B cell (primary cell): ENCODE measurements at regions of chr17 and their contacts with region 1.

Region 1: DNA sequence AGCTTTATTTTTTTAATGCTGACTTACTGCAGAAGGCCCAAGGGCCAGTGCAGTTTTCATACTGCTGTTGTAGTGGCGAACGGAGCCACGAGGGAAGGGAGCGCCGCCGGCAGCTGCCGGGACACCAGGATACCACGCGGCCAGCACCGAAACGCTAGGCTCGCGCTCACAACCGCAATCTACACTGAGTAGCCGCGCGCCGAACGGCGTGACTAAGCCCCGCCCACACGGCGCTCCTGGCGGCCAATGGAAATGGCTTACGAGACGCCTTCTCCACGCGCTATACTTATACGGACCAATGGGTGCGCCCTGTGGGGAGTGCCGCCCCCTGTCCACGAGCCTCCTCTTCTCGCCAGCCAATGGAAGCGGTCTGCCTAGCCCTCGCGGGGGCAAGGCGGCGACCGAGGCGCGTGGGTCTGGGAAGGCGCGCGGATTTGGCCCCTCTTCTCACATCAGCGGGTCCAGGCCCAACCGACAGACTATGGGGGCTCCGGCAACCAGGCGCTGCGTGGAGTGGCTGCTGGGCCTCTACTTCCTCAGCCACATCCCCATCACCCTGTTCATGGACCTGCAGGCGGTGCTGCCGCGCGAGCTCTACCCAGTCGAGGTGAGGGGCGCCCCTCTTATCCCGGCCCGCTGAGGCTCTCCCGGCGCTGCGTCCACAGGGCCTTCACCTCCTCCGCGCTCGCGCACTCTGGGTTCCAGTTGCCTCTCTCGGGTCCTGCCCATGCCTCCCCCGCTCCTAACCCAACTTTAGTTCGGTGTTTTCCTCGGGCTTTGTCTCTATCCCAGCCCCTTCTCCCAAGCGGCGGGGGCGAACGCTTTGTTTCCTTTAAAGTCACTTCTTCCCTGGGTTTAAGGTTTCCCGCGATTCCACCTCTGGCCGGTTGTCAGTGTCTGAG is at the start of gene TMEM97:
- DNase-seq: peak; percentile 96
- ATAC-seq: peak; percentile 99
- H3K4me3 ChIP-seq: peak within 1 kb of the TSS; percentile 49 to 83 (median 67)
- H3K4me3 Mint-ChIP-seq: peak within 1 kb of the TSS; percentile 88
- H3K27ac ChIP-seq: peak within 1 kb of the TSS; percentile 8 to 37
- H3K27ac Mint-ChIP-seq: peak within 1 kb of the TSS; percentile 88
- H3K4me1 ChIP-seq: peaks cover 13 to 22% of the 10 kb centered on the region in 2 donors
- H3K4me1 Mint-ChIP-seq: peaks cover 22% of the 10 kb centered on the region
- H3K27me3 ChIP-seq: no peaks in the 10 kb centered on the region
- H3K27me3 Mint-ChIP-seq: no peaks in the 10 kb centered on the region
- CTCF ChIP-seq: no peak
- total RNA-seq, gene TMEM97: 5.4 and 6.4 TPM in 2 replicates

Region 2: DNA sequence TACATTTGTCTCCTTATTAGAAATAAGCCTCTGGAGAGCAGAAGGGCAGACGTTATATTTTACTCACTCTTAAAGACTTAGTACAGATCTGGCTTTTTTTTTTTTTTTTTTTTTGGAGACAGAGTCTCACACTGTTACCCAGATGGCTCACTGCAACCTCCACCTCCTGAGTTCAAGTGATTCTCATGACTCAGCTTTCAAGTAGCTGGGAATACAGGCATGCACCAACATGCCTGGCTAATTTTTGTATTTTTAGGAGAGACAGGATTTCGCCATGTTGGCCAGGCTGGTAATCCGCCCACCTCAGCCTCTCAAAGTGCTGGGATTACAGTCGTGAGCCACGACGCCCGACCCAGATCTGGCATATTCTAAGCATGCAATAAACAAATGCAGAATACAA is 36.4 kb before region 1 on chr17:
- CTCF ChIA-PET with region 1: no interaction called
- POLR2A ChIA-PET with region 1: no interaction called
- intact Hi-C with region 1: loop called (anchors 5 kb)
- DNase-seq: no peak
- ATAC-seq: no peak
- H3K4me3 ChIP-seq: no peak overlapping the region
- H3K4me3 Mint-ChIP-seq: no peak overlapping the region
- H3K27ac ChIP-seq: no peak overlapping the region
- H3K27ac Mint-ChIP-seq: no peak overlapping the region
- H3K4me1 ChIP-seq: peaks cover 12 to 14% of the 10 kb centered on the region in 2 donors
- H3K4me1 Mint-ChIP-seq: peaks cover 11% of the 10 kb centered on the region
- H3K27me3 ChIP-seq: peaks cover 0 to 23% (median 10%) of the 10 kb centered on the region in 4 experiments
- H3K27me3 Mint-ChIP-seq: peaks cover 10% of the 10 kb centered on the region
- CTCF ChIP-seq: no peak

Region 3: DNA sequence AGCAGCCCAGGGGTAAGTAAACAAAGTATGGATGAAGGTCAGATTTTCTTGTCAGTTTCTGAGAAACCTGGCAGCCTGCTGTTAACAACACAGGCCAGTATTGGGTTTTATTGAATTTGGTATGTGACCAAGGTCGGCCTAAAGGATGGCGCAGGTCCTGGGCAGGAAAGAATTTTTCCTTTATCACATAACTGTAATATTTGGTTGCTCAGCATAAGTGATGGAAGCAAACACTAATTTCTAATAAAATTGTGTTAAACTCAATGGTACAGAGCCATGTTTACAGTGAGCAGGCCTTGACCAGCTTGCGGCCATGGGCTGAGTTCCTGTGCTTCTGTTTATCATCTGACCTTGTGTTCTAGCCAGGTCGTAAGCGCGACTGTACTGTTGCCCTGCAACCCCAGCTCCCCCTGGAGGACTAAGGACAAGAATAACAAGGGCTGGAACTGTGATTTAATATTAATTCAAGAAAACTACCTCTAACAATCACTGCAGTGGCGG is 27.8 kb after region 1 on chr17:
- CTCF ChIA-PET with region 1: no interaction called
- POLR2A ChIA-PET with region 1: no interaction called
- intact Hi-C with region 1: no loop called
- DNase-seq: no peak
- ATAC-seq: no peak
- H3K4me3 ChIP-seq: no peak overlapping the region
- H3K4me3 Mint-ChIP-seq: no peak overlapping the region
- H3K27ac ChIP-seq: no peak overlapping the region
- H3K27ac Mint-ChIP-seq: no peak overlapping the region
- H3K4me1 ChIP-seq: no peaks in the 10 kb centered on the region
- H3K4me1 Mint-ChIP-seq: no peaks in the 10 kb centered on the region
- H3K27me3 ChIP-seq: no peaks in the 10 kb centered on the region
- H3K27me3 Mint-ChIP-seq: no peaks in the 10 kb centered on the region
- CTCF ChIP-seq: no peak

Region 4: GRCh38 chr17:28357061-28357900 is 38.3 kb after region 1 on chr17 and contains the start of gene POLDIP2:
- CTCF ChIA-PET with region 1: no interaction called
- POLR2A ChIA-PET with region 1: interaction called, 3 read pairs
- intact Hi-C with region 1: loop called (anchors 1 kb)
- DNase-seq: peak; percentile 96
- ATAC-seq: peak; percentile 98
- H3K4me3 ChIP-seq: peak within 1 kb of the TSS; percentile 74 to 91 (median 81)
- H3K4me3 Mint-ChIP-seq: peak within 1 kb of the TSS; percentile 97
- H3K27ac ChIP-seq: peak within 1 kb of the TSS; percentile 67 to 83
- H3K27ac Mint-ChIP-seq: peak within 1 kb of the TSS; percentile 97
- H3K4me1 ChIP-seq: peaks cover 17 to 22% of the 10 kb centered on the region in 2 donors
- H3K4me1 Mint-ChIP-seq: peaks cover 22% of the 10 kb centered on the region
- H3K27me3 ChIP-seq: no peaks in the 10 kb centered on the region
- H3K27me3 Mint-ChIP-seq: no peaks in the 10 kb centered on the region
- CTCF ChIP-seq: peak; percentile 22
- total RNA-seq, gene POLDIP2: 29.7 and 35.7 TPM in 2 replicates